Right ventricle myocardium inferior (tissue), 1 donor: ENCODE measurements at regions of chr14 and their contacts with region 1.

Region 1: GRCh38 chr14:49867831-49868723 is 15.5 kb upstream of the NEMF start:
- DNase-seq: peak; percentile 99
- ATAC-seq: peak; percentile 97

Region 2: GRCh38 chr14:49633640-49634546 is 234.2 kb before region 1 on chr14:
- intact Hi-C with region 1: loop called (anchors 10 kb)
- DNase-seq: peak; percentile 96
- ATAC-seq: peak; percentile 97

Region 3: GRCh38 chr14:49892636-49893308 is 24.7 kb after region 1 on chr14 and contains the start of gene ARF6:
- intact Hi-C with region 1: loop called (anchors 1 kb)
- DNase-seq: peak; percentile 100
- ATAC-seq: peak; percentile 99
- total RNA-seq, gene ARF6: 25.1 TPM

Region 4: DNA sequence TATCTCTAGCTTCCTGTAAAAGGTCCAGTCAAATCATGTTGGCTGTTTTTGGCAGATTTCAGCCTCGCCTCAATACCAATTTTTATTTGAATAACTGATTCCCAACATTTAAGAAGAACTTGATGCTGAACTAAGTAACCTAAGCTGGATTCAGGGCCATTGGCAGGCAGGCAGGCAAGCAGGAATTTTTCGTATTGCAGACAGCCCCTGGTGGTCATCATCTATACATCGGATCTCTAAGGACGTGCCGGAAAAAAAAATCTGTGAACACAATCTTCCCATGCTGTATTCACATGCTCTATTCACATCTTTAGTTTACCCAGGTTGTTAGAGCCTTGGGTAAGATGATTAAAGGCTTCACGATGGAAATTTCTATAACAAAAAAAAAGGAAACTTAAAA is 241.3 kb after region 1 on chr14:
- intact Hi-C with region 1: loop called (anchors 5 kb)
- DNase-seq: no peak
- ATAC-seq: no peak

Region 5: GRCh38 chr14:50532502-50533240 is 664.6 kb after region 1 on chr14 and contains the start of gene MAP4K5:
- intact Hi-C with region 1: loop called (anchors 5 kb)
- DNase-seq: peak; percentile 96
- ATAC-seq: peak; percentile 100
- total RNA-seq, gene MAP4K5: 14.3 TPM